ENCODE measurements at regions of chr12 and their contacts with region 1.

Region 1: GRCh38 chr12:78181544-78182162 is 351.0 kb downstream of the NAV3 start:
- DNase-seq: peak; percentile 52
- H3K4me3 Mint-ChIP-seq: no peak overlapping the region
- H3K27ac Mint-ChIP-seq: no peak overlapping the region
- H3K4me1 Mint-ChIP-seq: peaks cover 7% of the 10 kb centered on the region
- H3K27me3 Mint-ChIP-seq: no peaks in the 10 kb centered on the region
- CTCF ChIP-seq: peak; percentile 75

Region 2: GRCh38 chr12:78343657-78344056 is 162.0 kb after region 1 on chr12:
- CTCF ChIA-PET with region 1: no interaction called
- POLR2A ChIA-PET with region 1: no interaction called
- intact Hi-C with region 1: no loop called
- DNase-seq: no peak
- H3K4me3 Mint-ChIP-seq: no peak overlapping the region
- H3K27ac Mint-ChIP-seq: no peak overlapping the region
- H3K4me1 Mint-ChIP-seq: no peaks in the 10 kb centered on the region
- H3K27me3 Mint-ChIP-seq: no peaks in the 10 kb centered on the region
- CTCF ChIP-seq: no peak

Region 3: DNA sequence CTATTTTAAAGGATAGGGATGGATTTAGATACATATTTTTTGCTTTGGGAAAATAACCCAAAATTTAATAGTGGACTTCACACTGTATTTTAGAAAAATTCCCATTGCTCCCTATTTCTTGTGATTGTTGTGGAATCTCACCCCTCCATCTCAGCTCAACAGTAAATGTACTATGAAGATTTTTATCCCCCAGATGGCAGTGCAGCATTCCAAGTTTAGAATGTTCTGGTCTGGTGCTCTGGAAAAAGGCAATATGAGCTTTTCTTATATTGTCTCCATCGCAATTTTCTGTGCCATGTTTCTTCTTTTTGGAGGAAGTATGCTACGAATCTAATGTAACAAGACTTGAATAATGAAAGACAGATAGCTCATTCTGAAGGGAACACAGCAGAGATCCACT is 211.3 kb after region 1 on chr12:
- CTCF ChIA-PET with region 1: no interaction called
- POLR2A ChIA-PET with region 1: interaction called, 3 read pairs
- intact Hi-C with region 1: loop called (anchors 5 kb)
- DNase-seq: peak; percentile 38
- H3K4me3 Mint-ChIP-seq: no peak overlapping the region
- H3K27ac Mint-ChIP-seq: no peak overlapping the region
- H3K4me1 Mint-ChIP-seq: no peaks in the 10 kb centered on the region
- H3K27me3 Mint-ChIP-seq: no peaks in the 10 kb centered on the region
- CTCF ChIP-seq: peak; percentile 19

Region 4: DNA sequence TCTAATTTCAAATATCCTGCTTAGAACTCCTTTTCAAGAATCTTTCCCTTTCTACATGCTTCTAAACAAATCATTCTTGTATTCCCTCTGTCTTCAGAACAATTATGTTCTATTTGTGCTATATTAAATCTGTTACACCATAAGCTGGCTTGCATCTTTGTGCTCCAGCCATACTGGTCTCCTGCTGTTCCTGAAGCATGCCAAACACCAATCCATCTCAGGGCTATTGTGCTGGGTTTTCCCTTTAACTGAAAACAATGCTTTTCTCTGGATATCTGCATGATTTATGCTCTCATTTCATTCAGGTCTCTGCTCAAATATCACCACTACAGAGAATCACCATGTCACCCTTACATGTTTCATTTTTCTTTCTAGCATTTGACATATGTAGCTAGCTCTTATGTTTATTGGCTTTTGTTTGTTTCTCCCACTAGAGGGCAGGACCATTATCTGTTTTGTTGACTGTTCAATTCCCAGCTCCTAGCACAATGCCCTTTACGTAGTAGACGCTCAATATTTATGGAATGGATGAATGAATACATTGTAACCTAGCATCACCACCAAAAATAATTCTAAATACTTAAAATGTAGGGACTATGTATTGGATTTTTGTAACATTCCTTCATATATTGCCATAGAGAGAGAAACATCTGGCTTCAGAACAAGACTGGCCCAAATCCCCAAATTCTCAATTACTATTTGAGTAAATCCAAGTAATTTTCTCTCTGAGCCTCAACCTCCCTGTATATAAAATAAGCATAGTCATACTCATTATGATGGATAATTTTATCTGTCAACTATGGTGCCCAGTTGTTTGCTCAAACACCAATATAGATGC is 380.9 kb after region 1 on chr12:
- CTCF ChIA-PET with region 1: interaction called, 6 read pairs
- POLR2A ChIA-PET with region 1: no interaction called
- intact Hi-C with region 1: loop called (anchors 1 kb)
- DNase-seq: peak; percentile 47
- H3K4me3 Mint-ChIP-seq: no peak overlapping the region
- H3K27ac Mint-ChIP-seq: no peak overlapping the region
- H3K4me1 Mint-ChIP-seq: peaks cover 6% of the 10 kb centered on the region
- H3K27me3 Mint-ChIP-seq: no peaks in the 10 kb centered on the region
- CTCF ChIP-seq: peak; percentile 32

Region 5: DNA sequence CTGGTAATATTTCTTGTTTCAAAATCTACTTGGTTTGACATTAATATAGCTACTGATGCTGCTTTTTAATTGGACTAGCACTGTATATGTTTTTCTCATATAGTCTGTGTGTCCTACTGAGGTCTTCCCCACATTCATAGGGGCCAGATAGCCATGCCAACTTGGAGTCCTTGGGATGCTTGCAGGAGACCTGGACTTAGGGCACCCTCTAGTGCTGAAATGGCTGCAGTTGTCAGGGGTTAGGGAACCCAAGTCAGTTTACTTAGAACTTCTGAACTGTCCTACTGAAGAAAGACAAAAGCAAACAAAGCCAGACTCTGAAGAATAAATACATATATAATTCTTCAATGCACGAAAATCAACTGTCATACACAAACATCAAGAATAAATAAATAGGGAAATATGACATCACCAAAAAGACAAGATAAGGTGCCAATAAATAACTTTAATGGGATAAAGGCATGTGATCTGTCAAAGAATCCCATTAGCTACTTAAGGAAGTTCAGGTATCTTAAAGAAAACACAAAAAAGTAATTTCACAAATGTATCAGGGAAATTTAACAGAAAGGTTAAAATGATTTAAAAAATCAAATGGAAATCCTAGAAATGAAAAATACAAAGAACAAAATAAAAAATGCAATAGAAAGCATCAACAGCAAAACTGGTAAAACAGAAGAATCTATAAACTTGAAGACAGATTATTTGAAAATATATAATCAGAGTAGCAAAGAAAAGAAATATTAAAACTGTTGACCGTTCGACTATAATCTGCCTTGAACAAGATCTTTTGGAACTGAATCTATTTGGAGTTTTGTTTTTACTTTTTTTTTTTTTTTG is 403.3 kb after region 1 on chr12:
- CTCF ChIA-PET with region 1: no interaction called
- POLR2A ChIA-PET with region 1: no interaction called
- intact Hi-C with region 1: loop called (anchors 2 kb)
- DNase-seq: peak; percentile 50
- H3K4me3 Mint-ChIP-seq: no peak overlapping the region
- H3K27ac Mint-ChIP-seq: no peak overlapping the region
- H3K4me1 Mint-ChIP-seq: no peaks in the 10 kb centered on the region
- H3K27me3 Mint-ChIP-seq: no peaks in the 10 kb centered on the region
- CTCF ChIP-seq: peak; percentile 29

Region 6: GRCh38 chr12:79174626-79175025 is 993.0 kb after region 1 on chr12:
- CTCF ChIA-PET with region 1: interaction called, 21 read pairs
- POLR2A ChIA-PET with region 1: no interaction called
- intact Hi-C with region 1: loop called (anchors 1 kb)
- DNase-seq: peak; percentile 50
- H3K4me3 Mint-ChIP-seq: no peak overlapping the region
- H3K27ac Mint-ChIP-seq: no peak overlapping the region
- H3K4me1 Mint-ChIP-seq: no peaks in the 10 kb centered on the region
- H3K27me3 Mint-ChIP-seq: no peaks in the 10 kb centered on the region
- CTCF ChIP-seq: peak; percentile 49

Region 7: GRCh38 chr12:79373896-79374499 is 1192.3 kb after region 1 on chr12:
- CTCF ChIA-PET with region 1: interaction called, 3 read pairs
- POLR2A ChIA-PET with region 1: no interaction called
- intact Hi-C with region 1: loop called (anchors 10 kb)
- DNase-seq: peak; percentile 49
- H3K4me3 Mint-ChIP-seq: no peak overlapping the region
- H3K27ac Mint-ChIP-seq: no peak overlapping the region
- H3K4me1 Mint-ChIP-seq: peaks cover 5% of the 10 kb centered on the region
- H3K27me3 Mint-ChIP-seq: no peaks in the 10 kb centered on the region
- CTCF ChIP-seq: peak; percentile 73

Measured in MCF 10A (cell line).